A549 (cell line): ENCODE measurements at regions of chr11 and their contacts with region 1.

Region 1: GRCh38 chr11:10680956-10681487 is 12.5 kb downstream of the IRAG1 start:
- DNase-seq: no peak
- ATAC-seq: no peak
- H3K4me3 ChIP-seq: no peak overlapping the region
- H3K27ac ChIP-seq: no peak overlapping the region
- H3K4me1 ChIP-seq: no peaks in the 10 kb centered on the region
- CTCF ChIP-seq: no peak
- EP300 ChIP-seq: no peak
- POLR2A ChIP-seq: no peak
- RAD21 ChIP-seq: no peak

Region 2: DNA sequence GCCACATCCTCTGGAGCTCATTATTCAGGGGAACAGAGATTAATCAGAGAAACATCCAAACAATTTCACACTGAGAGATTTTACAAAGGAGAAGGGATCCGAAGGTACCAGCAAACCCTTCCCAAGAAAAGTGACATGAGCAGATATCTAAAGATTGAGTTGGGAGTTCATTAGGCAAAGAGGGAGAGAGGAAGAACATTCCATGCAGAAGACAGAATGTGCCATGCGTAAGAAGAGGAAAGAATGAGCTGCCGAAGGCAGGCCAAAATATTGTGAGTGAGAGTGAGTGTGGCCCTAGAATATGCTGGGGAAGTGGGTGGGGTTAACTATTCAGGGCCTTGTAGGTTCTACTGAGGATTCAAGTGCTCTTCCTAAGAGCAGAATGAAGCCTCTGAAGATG is 62.5 kb before region 1 on chr11:
- CTCF ChIA-PET with region 1: no interaction called
- POLR2A ChIA-PET with region 1: no interaction called
- DNase-seq: no peak
- ATAC-seq: no peak
- H3K4me3 ChIP-seq: no peak overlapping the region
- H3K27ac ChIP-seq: no peak overlapping the region
- H3K4me1 ChIP-seq: no peaks in the 10 kb centered on the region
- CTCF ChIP-seq: no peak
- EP300 ChIP-seq: no peak
- POLR2A ChIP-seq: no peak
- RAD21 ChIP-seq: no peak

Region 3: DNA sequence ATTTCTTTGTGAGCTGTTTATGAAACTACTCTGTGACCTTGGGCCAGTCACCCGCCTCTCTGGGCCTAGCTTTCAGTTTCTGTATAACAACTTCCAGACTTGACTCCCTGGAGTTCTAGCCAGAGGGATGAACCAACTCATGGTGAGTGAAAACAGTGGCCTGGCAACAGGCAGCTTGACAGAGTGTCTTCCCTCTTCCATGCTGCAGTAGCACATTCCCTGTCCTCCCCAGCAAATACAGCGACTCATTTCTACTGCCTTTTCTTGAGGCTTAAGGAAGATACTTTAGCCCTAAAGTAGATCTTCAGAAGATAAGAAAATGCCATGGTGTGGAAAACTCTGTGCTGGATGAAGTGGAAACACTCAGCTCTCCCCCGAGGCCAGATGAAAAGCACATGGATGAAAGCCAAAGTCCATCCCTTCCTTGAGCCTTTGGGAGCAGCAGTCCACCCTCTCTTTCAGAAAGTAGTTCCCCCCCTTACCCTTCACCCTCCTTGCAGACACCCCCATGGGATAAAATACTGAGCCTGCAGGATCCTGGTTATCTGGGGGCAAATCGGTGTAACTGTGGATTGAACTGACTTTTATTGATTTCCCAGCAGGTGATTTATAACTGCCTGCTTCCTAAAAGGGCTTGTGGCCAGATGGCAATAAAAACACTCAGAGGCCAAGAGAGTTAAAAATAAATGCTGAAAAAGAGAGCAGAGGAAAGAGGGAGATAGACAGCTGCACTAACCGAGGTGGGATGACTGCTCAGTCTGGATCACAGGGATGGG is 11.6 kb before region 1 on chr11:
- CTCF ChIA-PET with region 1: interaction called, 11 read pairs
- POLR2A ChIA-PET with region 1: no interaction called
- DNase-seq: peak in 1 of 2 experiments; percentile 29
- ATAC-seq: peak in 1 of 2 experiments; percentile 49; a peak in 3 of 6 replicates
- H3K4me3 ChIP-seq: no peak overlapping the region
- H3K27ac ChIP-seq: peak overlapping the region; percentile 13 to 63; a peak in 5 of 6 replicates
- H3K4me1 ChIP-seq: peaks cover 52% of the 10 kb centered on the region
- CTCF ChIP-seq: no peak
- EP300 ChIP-seq: no peak
- POLR2A ChIP-seq: no peak
- RAD21 ChIP-seq: no peak